Activated CD4-positive, alpha-beta T cell treated with anti-CD3 and anti-CD28 coated beads for 36 hours (primary cell): ENCODE measurements at regions of chr7 and their contacts with region 1.

Region 1: DNA sequence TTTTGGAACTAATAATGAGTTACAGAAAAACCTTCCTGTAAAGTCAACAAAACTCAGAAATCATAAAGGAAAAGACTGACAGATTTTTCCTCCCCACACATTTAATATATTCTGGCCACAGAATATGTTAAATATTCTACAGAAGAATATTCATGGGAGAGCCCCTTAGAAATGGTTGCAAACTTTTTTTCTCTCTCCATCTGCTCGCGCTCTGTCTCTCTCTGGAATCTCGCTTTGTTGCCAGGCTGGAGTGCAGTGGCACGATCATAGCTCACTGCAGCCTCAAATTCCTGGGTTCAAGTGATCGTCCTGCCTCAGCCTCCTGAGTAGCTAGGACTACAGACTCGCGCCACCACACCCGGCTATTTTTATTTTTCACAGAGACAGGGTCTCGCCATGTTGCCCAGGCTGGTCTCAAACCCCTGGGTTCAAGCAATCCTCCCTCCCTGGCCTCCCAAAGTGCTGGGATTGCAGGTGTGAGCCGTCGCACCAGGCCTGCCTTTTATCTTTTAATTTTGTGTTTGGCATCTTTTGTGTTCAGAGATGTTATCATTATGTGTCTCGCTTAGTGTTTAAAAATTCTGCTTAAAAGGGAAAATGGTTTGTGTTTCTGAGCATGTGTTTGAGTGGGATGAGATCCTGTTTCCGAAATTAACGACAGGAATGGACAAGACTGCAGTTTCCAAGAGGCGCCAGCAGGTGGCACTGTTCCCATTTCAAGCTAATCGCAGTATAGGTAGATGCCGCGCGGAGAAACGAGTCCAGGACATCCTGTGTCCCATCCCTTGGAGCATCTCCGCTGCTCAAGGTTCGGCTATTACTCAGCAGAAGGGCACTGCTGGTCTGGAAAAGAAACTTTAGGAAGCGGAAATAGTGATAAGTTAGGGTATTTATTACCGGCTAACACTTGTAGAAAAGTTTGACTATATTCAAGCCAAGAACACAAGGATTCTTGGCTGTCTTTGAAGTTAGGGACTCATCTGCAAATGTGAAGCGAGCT is 23.1 kb upstream of the ST7 start:
- DNase-seq: peak; percentile 86
- ATAC-seq: peak; percentile 85
- H3K4me3 Mint-ChIP-seq: no peak overlapping the region
- H3K27ac Mint-ChIP-seq: no peak overlapping the region
- H3K4me1 Mint-ChIP-seq: peaks cover 6% of the 10 kb centered on the region
- H3K27me3 Mint-ChIP-seq: peaks cover 3% of the 10 kb centered on the region

Region 2: DNA sequence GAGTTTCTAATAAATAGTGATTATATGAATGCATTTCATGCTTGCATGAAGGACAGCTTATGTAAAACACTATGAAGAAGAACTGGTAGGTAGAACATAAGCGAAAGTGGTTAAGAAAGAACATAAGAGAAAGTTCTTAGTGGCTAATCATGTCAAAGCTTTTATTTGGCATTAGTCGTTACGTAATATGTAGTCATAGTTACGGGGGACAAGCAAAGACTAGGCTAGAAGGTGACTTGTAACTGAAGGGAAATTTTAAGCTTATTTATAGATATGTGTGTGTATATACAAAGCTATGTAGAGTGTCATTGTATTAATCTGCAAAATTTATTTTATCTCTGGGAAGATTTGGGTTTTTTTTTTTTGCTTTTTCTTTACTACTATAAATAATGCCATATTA is 30.9 kb before region 1 on chr7:
- CTCF ChIA-PET with region 1: no interaction called
- POLR2A ChIA-PET with region 1: no interaction called
- intact Hi-C with region 1: no loop called
- DNase-seq: no peak
- ATAC-seq: no peak
- H3K4me3 Mint-ChIP-seq: no peak overlapping the region
- H3K27ac Mint-ChIP-seq: no peak overlapping the region
- H3K4me1 Mint-ChIP-seq: peaks cover 5% of the 10 kb centered on the region
- H3K27me3 Mint-ChIP-seq: no peaks in the 10 kb centered on the region

Region 3: DNA sequence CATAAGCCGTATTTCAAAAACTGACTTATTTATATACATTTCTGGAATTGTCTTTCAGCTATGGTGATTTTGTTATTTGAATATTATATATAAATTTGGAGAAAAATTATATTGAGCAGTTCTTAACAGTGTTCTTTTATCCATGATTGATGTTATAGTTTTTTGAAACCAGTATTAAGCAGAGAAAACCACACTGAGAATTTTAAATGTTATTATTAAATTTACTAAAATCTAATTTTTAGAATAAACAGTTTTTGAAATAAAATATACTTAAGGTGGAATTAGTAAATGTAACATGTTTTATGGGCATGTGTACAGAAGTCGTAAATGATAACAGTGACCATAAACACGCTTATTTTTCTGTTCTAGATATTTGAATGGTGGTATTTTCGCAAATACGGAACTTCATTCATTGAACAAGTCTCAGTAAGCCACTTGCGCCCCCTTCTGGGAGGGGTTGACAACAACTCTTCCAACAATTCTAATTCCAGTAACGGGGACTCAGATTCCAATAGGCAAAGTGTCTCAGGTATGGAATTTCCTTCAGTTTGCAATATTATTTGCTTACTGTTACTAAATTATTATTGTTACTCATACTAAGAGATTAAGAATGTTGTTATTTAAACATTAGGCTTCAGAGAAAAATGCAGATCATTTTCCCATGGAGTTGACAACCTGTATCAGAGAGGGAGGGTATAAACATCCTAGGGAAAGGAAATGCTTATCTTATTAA is 189.1 kb after region 1 on chr7:
- CTCF ChIA-PET with region 1: interaction called, 83 read pairs
- POLR2A ChIA-PET with region 1: no interaction called
- intact Hi-C with region 1: loop called (anchors 1 to 2 kb)
- DNase-seq: peak; percentile 87
- ATAC-seq: no peak
- H3K4me3 Mint-ChIP-seq: no peak overlapping the region
- H3K27ac Mint-ChIP-seq: no peak overlapping the region
- H3K4me1 Mint-ChIP-seq: peaks cover under 1% of the 10 kb centered on the region
- H3K27me3 Mint-ChIP-seq: no peaks in the 10 kb centered on the region

Region 4: DNA sequence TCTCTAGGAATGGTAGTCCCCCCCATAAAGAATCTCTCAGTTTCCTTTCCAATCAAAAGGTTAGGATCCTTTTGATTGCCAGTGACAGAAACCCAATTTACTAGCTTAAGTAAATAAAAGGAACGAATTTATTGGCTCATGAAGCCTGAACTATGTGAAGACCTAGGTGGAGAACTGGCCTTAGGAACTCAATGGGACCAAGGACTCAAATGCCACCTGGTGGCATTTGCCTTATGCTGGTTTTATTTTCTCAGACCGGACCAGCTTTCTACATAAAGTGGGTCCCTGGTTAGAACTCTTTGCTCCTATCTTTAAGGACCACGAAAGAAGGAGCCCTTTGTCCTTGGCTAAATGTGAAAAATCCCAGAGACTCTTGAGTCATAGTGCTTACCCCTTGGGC is 575.0 kb after region 1 on chr7:
- CTCF ChIA-PET with region 1: no interaction called
- POLR2A ChIA-PET with region 1: no interaction called
- intact Hi-C with region 1: no loop called
- DNase-seq: no peak
- ATAC-seq: no peak
- H3K4me3 Mint-ChIP-seq: no peak overlapping the region
- H3K27ac Mint-ChIP-seq: no peak overlapping the region
- H3K4me1 Mint-ChIP-seq: no peaks in the 10 kb centered on the region
- H3K27me3 Mint-ChIP-seq: no peaks in the 10 kb centered on the region